ENCODE measurements at regions of chr2 and their contacts with region 1.

Region 1: DNA sequence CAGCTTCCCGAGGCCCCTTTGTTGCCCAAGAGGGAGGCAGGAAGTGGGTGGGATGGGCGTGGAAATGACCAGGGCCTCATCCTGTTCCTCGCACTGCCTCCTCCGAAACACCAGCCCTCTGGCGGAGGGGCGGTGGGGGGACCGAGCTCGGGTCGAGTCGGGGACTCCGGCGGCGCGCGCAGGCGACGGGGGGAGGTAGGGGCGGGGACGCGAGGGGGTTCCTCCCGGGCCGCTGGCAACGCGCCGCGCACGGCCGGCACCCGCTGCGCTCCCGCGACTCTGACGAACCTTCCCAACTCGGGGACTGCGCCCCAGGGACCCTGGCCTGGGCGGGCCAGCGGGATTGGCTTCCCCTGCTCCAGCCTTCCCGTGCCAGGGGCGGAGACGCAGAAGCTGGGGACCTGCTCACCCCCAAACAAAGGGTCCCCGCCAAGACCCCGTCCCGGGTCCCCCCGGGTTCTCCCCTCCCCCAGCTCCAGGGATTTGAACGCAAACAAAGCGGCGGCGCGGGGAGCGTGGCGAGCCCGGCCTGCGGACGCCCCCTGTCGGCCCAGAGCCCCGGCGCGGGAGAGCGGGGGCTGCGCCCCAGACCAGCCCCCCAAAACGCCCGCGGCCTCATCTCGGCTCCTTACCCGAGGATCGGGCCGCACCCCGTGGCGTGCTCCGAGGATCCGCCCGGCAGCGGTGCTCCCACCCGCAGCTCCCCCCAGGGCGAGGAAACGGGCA is 1.2 kb downstream of the SEMA4C start:
- DNase-seq: peak; percentile 82 to 89 (median 86)
- ATAC-seq: peak; percentile 69
- H3K4me3 ChIP-seq: peak overlapping the region; percentile 67
- H3K4me1 ChIP-seq: peaks cover 27% of the 10 kb centered on the region
- CTCF ChIP-seq: peak; percentile 64

Region 2: DNA sequence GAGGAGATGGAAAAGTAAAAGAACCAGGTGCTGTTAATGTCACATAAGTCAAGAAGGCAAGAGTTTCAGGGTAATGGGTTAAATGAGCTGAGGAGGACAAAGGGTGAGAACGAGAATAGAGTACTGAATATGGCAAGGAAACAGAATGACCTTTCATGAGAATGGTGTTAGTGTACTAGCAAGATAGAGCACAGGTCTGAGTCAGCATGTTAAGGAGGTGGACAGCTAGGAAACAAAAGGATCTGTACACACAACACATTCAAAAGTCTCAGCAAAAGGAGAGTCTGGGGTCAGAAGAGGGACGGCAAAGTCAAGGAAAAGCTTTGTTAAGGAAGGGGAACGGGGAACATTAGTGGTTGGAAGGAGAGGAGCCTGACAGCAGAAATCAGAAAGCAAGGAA is 157.7 kb before region 1 on chr2:
- intact Hi-C with region 1: no loop called
- DNase-seq: no peak
- ATAC-seq: no peak
- H3K4me3 ChIP-seq: no peak overlapping the region
- H3K4me1 ChIP-seq: peaks cover 15% of the 10 kb centered on the region
- CTCF ChIP-seq: no peak

Region 3: GRCh38 chr2:96907115-96908041 is 38.7 kb after region 1 on chr2:
- intact Hi-C with region 1: loop called in 1 of 2 experiments (anchors 5 kb)
- DNase-seq: peak; percentile 51 to 74 (median 66)
- ATAC-seq: peak; percentile 74
- H3K4me3 ChIP-seq: no peak overlapping the region
- H3K4me1 ChIP-seq: peaks cover 6% of the 10 kb centered on the region
- CTCF ChIP-seq: no peak

Region 4: GRCh38 chr2:96951093-96951654 is 82.5 kb after region 1 on chr2:
- intact Hi-C with region 1: loop called in 1 of 2 experiments (anchors 5 kb)
- DNase-seq: peak; percentile 72 to 85 (median 81)
- ATAC-seq: peak; percentile 90
- H3K4me3 ChIP-seq: no peak overlapping the region
- H3K4me1 ChIP-seq: peaks cover 27% of the 10 kb centered on the region
- CTCF ChIP-seq: peak; percentile 85

Region 5: GRCh38 chr2:96985181-96985945 is 116.6 kb after region 1 on chr2:
- intact Hi-C with region 1: no loop called
- DNase-seq: no peak
- ATAC-seq: no peak
- H3K4me3 ChIP-seq: no peak overlapping the region
- H3K4me1 ChIP-seq: no peaks in the 10 kb centered on the region
- CTCF ChIP-seq: no peak

Measured in mucosa of descending colon (tissue), 3 donors.